ENCODE measurements at regions of chr2 and their contacts with region 1.

Region 1: GRCh38 chr2:25851740-25852503 is 26.4 kb downstream of the ASXL2 start:
- H3K4me3 ChIP-seq: no peak overlapping the region
- H3K27ac ChIP-seq: no peak overlapping the region
- H3K4me1 ChIP-seq: peaks cover 13% of the 10 kb centered on the region
- CTCF ChIP-seq: peak; percentile 62

Region 2: GRCh38 chr2:25777077-25777476 is 74.8 kb before region 1 on chr2:
- CTCF ChIA-PET with region 1: no interaction called
- POLR2A ChIA-PET with region 1: no interaction called
- H3K4me3 ChIP-seq: no peak overlapping the region
- H3K27ac ChIP-seq: no peak overlapping the region
- H3K4me1 ChIP-seq: no peaks in the 10 kb centered on the region
- CTCF ChIP-seq: no peak

Region 3: GRCh38 chr2:25825238-25825637 is 26.7 kb before region 1 on chr2:
- CTCF ChIA-PET with region 1: interaction called, 13 read pairs
- POLR2A ChIA-PET with region 1: no interaction called
- H3K4me3 ChIP-seq: no peak overlapping the region
- H3K27ac ChIP-seq: no peak overlapping the region
- H3K4me1 ChIP-seq: peaks cover 4% of the 10 kb centered on the region; the same call in 1 of the 2 replicates
- CTCF ChIP-seq: no peak

Region 4: GRCh38 chr2:25867396-25868003 is 15.6 kb after region 1 on chr2:
- CTCF ChIA-PET with region 1: interaction called, 30 read pairs
- POLR2A ChIA-PET with region 1: interaction called, 3 read pairs
- H3K4me3 ChIP-seq: no peak overlapping the region
- H3K27ac ChIP-seq: no peak overlapping the region
- H3K4me1 ChIP-seq: no peaks in the 10 kb centered on the region
- CTCF ChIP-seq: no peak

Region 5: DNA sequence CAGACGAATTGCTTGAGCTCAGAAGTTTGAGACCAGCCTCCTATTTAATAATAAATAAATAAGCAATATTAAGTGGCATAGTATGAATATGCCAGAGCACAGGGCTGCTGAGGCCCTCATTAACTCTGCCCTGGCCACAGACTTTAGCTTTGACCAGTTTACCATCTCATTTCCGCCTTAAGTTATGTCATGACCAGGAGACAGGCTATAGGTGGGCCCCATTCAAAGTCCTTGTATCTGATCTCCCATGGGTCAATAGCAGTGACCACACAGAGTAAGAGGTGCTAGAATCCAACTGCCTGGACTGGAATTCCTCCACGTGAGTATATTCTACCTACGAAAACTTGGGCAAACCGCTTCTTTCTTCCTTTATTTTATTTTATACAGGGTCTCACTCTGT is 39.8 kb after region 1 on chr2:
- CTCF ChIA-PET with region 1: no interaction called
- POLR2A ChIA-PET with region 1: no interaction called
- H3K4me3 ChIP-seq: no peak overlapping the region
- H3K27ac ChIP-seq: no peak overlapping the region
- H3K4me1 ChIP-seq: no peaks in the 10 kb centered on the region
- CTCF ChIP-seq: no peak

Region 6: DNA sequence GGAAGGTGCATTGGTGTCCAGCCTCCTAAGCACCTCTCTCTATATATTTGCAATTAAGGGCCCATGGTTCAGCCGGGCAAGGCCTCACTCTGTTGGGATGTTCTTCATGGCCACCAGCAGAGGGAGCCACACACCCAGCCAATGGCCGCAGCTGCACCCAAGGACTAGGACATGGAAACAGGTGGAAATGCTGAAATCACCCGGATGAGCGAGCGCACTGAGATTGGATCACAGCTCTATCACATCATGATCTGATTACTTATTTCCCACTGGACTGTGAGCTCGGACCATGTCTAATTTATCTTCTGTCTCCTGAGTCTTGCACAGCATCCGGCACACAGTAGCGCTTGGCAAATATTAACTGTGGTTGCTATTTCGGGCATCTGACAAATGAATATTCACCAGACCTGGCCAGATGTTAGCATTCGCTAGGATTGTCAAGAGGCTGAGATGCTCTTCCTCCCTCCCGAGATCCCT is 99.2 kb after region 1 on chr2:
- CTCF ChIA-PET with region 1: interaction called, 21 read pairs
- POLR2A ChIA-PET with region 1: no interaction called
- H3K4me3 ChIP-seq: no peak overlapping the region
- H3K27ac ChIP-seq: no peak overlapping the region
- H3K4me1 ChIP-seq: no peaks in the 10 kb centered on the region
- CTCF ChIP-seq: peak; percentile 80

Region 7: GRCh38 chr2:25966538-25967265 is 114.8 kb after region 1 on chr2:
- CTCF ChIA-PET with region 1: no interaction called
- POLR2A ChIA-PET with region 1: no interaction called
- H3K4me3 ChIP-seq: no peak overlapping the region
- H3K27ac ChIP-seq: no peak overlapping the region
- H3K4me1 ChIP-seq: no peaks in the 10 kb centered on the region
- CTCF ChIP-seq: 0 out of 2 replicates have a peak, but pooled peaks have one; percentile 22

Measured in HEK293 (cell line).